ENCODE measurements at regions of chr4 and their contacts with region 1.

Region 1: GRCh38 chr4:143482840-143483239 is 30.7 kb upstream of the SMARCA5 start:
- DNase-seq: no peak
- H3K4me3 ChIP-seq: no peak overlapping the region
- H3K27ac ChIP-seq: no peak overlapping the region
- H3K4me1 ChIP-seq: no peaks in the 10 kb centered on the region
- H3K27me3 ChIP-seq: no peaks in the 10 kb centered on the region
- CTCF ChIP-seq: peak; percentile 49 to 58 (median 52)
- EP300 ChIP-seq: no peak
- POLR2A ChIP-seq: no peak

Region 2: GRCh38 chr4:143207557-143207956 is 275.3 kb before region 1 on chr4:
- in situ Hi-C with region 1: loop called (anchors 10 to 25 kb)
- intact Hi-C with region 1: loop called (anchors 5 kb)
- DNase-seq: no peak
- H3K4me3 ChIP-seq: no peak overlapping the region
- H3K27ac ChIP-seq: no peak overlapping the region
- H3K4me1 ChIP-seq: peaks cover 0 to 4% (median 0%) of the 10 kb centered on the region in 4 donors
- H3K27me3 ChIP-seq: no peaks in the 10 kb centered on the region
- CTCF ChIP-seq: peak; percentile 47 to 51 (median 49)
- EP300 ChIP-seq: no peak
- POLR2A ChIP-seq: no peak

Region 3: GRCh38 chr4:143329985-143330384 is 152.9 kb before region 1 on chr4:
- in situ Hi-C with region 1: loop called in 1 of 4 experiments (anchors 10 kb)
- intact Hi-C with region 1: loop called (anchors 10 kb)
- DNase-seq: no peak
- H3K4me3 ChIP-seq: no peak overlapping the region
- H3K27ac ChIP-seq: no peak overlapping the region
- H3K4me1 ChIP-seq: peaks cover 0 to 5% (median 0%) of the 10 kb centered on the region in 4 donors
- H3K27me3 ChIP-seq: no peaks in the 10 kb centered on the region
- CTCF ChIP-seq: no peak
- EP300 ChIP-seq: no peak
- POLR2A ChIP-seq: no peak

Measured in transverse colon (tissue), 4 donors.